HCT116 (cell line): ENCODE measurements at regions of chr12 and their contacts with region 1.

Region 1: GRCh38 chr12:88922816-88923215 is 342.5 kb upstream of the KITLG start:
- DNase-seq: no peak
- ATAC-seq: no peak
- H3K4me3 ChIP-seq: peak overlapping the region in 1 of 2 experiments; percentile 2; a peak in 1 of 4 replicates
- H3K27ac ChIP-seq: peak overlapping the region; percentile 98
- H3K4me1 ChIP-seq: peaks cover 87 to 94% of the 10 kb centered on the region in 2 experiments
- H3K27me3 ChIP-seq: no peaks in the 10 kb centered on the region
- CTCF ChIP-seq: no peak
- POLR2A ChIP-seq: no peak
- RAD21 ChIP-seq: no peak

Region 2: GRCh38 chr12:88633312-88633711 is 289.5 kb before region 1 on chr12:
- CTCF ChIA-PET with region 1: no interaction called
- POLR2A ChIA-PET with region 1: interaction called, 3 read pairs
- RAD21 ChIA-PET with region 1: no interaction called
- intact Hi-C with region 1: loop called (anchors 5 kb)
- DNase-seq: no peak
- ATAC-seq: no peak
- H3K4me3 ChIP-seq: no peak overlapping the region
- H3K27ac ChIP-seq: no peak overlapping the region
- H3K4me1 ChIP-seq: peaks cover 0 to under 1% of the 10 kb centered on the region in 2 experiments; a peak in 2 of 4 replicates
- H3K27me3 ChIP-seq: no peaks in the 10 kb centered on the region
- CTCF ChIP-seq: peak in 2 of 3 experiments; percentile 32 to 46; a peak in 3 of 6 replicates
- POLR2A ChIP-seq: no peak
- RAD21 ChIP-seq: peak; percentile 39

Region 3: DNA sequence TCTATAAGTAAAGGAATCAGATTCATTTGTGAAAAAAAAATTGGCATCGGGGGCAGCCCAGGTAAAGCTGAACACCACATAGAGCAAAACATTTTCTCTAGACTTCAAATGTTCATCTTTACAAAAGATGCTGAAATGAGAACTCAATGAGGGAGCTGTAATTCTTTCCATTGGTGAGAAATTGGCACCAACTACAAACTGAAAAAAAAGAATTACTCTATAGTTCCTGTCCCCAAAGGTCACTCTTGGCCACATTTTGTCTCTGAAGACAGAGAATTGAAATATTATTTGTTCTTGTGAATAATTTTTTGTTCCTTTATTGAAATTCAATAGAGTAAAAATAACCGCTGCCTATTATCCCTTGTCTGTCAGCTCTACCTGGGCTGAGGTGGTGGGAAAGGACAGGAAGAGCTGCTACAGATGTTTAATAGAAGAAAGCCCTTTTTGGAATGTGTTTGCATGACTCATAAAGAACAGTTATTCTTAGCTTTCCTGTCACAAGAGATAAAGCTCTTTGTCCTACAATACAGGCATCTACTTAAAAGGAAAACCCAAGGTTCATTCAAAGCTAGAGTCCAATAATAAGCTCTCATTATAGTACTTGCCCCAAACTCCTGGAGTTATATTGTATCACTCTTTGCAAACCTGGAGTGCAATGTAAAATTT is 37.5 kb after region 1 on chr12:
- CTCF ChIA-PET with region 1: no interaction called
- POLR2A ChIA-PET with region 1: interaction called, 11 read pairs
- RAD21 ChIA-PET with region 1: no interaction called
- intact Hi-C with region 1: no loop called
- DNase-seq: peak; percentile 91
- ATAC-seq: peak; percentile 85
- H3K4me3 ChIP-seq: peak overlapping the region in 1 of 2 experiments; percentile 8; a peak in 1 of 4 replicates
- H3K27ac ChIP-seq: peak overlapping the region; percentile 97
- H3K4me1 ChIP-seq: peaks cover 69 to 87% of the 10 kb centered on the region in 2 experiments
- H3K27me3 ChIP-seq: no peaks in the 10 kb centered on the region
- CTCF ChIP-seq: no peak
- POLR2A ChIP-seq: no peak
- RAD21 ChIP-seq: peak; percentile 29; the same call in 1 of the 2 replicates

Region 4: GRCh38 chr12:89135976-89136634 is 213.3 kb after region 1 on chr12:
- CTCF ChIA-PET with region 1: no interaction called
- POLR2A ChIA-PET with region 1: no interaction called
- RAD21 ChIA-PET with region 1: no interaction called
- intact Hi-C with region 1: no loop called
- DNase-seq: peak; percentile 68
- ATAC-seq: peak; percentile 83
- H3K4me3 ChIP-seq: 0 out of 4 replicates have a peak overlapping the region, but pooled peaks of 1 of the 2 experiments have one; percentile 2
- H3K27ac ChIP-seq: no peak overlapping the region
- H3K4me1 ChIP-seq: peaks cover 0 to 37% of the 10 kb centered on the region in 2 experiments; a peak in 3 of 4 replicates
- H3K27me3 ChIP-seq: no peaks in the 10 kb centered on the region
- CTCF ChIP-seq: no peak
- POLR2A ChIP-seq: no peak
- RAD21 ChIP-seq: peak; percentile 24; the same call in 1 of the 2 replicates